WTC11 (cell line): ENCODE measurements at regions of chr6 and their contacts with region 1.

Region 1: DNA sequence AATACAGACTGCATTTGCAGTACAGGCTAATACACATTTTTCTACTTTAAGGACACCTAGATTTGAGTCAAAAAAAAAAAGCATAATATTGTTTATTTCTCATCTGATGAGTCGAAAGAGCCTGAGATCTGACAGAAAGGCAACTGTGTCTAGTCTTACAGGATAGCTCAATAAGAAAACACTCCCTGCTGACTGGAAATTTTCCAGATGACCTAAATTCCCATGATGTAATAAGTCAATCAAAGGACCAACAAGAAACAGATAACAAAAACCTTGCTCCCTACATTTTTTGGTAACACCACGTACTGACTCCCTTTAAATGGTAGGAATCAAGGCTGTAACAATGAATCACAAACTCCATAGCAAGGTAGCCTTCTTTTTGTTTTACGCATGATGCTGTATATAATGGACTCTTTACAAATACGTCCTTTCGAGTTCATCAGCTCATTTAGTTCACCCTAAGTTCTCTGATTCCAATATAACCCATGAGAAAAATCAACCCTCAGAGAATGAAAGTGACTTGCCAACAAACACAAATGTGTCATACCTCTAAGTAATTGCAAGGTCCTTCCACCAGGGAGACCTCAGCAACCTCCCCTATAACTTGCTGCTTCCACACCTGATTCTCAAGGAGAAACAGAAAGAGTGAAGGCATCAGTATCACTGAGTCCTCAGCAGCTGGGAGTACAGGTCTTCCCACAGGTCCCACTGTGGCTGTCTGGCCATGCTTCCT is 12.1 kb downstream of the TBX18 start:
- DNase-seq: no peak
- ATAC-seq: peak; percentile 63
- H3K4me3 Mint-ChIP-seq: no peak overlapping the region
- H3K27ac Mint-ChIP-seq: no peak overlapping the region
- H3K4me1 Mint-ChIP-seq: no peaks in the 10 kb centered on the region
- H3K27me3 Mint-ChIP-seq: peaks cover 15% of the 10 kb centered on the region
- CTCF ChIP-seq: no peak

Region 2: GRCh38 chr6:84764332-84765049 is 12.2 kb after region 1 on chr6 and contains the start of gene TBX18:
- CTCF ChIA-PET with region 1: interaction called, 10 read pairs
- POLR2A ChIA-PET with region 1: no interaction called
- DNase-seq: peak; percentile 97
- ATAC-seq: peak; percentile 84
- H3K4me3 Mint-ChIP-seq: peak within 1 kb of the TSS; percentile 82
- H3K27ac Mint-ChIP-seq: no peak within 1 kb of the TSS
- H3K4me1 Mint-ChIP-seq: peaks cover 46% of the 10 kb centered on the region
- H3K27me3 Mint-ChIP-seq: peaks cover 100% of the 10 kb centered on the region
- CTCF ChIP-seq: no peak
- total RNA-seq, gene TBX18: 0.15 TPM in 1 of 3 replicates, not detected in the others

Region 3: DNA sequence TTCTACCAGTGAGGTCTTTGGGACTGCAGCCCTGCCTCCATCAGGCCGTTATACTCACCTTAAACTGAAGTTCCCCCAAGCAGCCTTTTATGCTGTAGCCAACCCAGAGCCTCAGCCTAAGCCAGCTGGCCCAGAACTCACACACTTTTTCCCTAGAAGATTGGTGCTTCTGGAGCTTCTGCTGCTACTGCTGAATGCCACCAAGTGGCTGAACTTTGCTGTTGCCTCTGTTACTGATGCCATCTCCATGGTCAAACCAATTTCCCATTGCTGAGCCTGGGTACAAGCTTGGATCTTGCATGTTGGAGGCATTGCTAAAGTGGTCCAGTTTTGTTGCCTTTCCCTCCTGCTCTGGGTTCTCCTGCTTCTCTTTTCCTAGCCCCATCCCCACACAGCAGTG is 27.1 kb after region 1 on chr6:
- CTCF ChIA-PET with region 1: no interaction called
- POLR2A ChIA-PET with region 1: no interaction called
- DNase-seq: no peak
- ATAC-seq: no peak
- H3K4me3 Mint-ChIP-seq: no peak overlapping the region
- H3K27ac Mint-ChIP-seq: no peak overlapping the region
- H3K4me1 Mint-ChIP-seq: peaks cover 5% of the 10 kb centered on the region
- H3K27me3 Mint-ChIP-seq: peaks cover 99% of the 10 kb centered on the region
- CTCF ChIP-seq: no peak